Naive thymus-derived CD4-positive, alpha-beta T cell (primary cell): ENCODE measurements at regions of chr7 and their contacts with region 1.

Region 1: DNA sequence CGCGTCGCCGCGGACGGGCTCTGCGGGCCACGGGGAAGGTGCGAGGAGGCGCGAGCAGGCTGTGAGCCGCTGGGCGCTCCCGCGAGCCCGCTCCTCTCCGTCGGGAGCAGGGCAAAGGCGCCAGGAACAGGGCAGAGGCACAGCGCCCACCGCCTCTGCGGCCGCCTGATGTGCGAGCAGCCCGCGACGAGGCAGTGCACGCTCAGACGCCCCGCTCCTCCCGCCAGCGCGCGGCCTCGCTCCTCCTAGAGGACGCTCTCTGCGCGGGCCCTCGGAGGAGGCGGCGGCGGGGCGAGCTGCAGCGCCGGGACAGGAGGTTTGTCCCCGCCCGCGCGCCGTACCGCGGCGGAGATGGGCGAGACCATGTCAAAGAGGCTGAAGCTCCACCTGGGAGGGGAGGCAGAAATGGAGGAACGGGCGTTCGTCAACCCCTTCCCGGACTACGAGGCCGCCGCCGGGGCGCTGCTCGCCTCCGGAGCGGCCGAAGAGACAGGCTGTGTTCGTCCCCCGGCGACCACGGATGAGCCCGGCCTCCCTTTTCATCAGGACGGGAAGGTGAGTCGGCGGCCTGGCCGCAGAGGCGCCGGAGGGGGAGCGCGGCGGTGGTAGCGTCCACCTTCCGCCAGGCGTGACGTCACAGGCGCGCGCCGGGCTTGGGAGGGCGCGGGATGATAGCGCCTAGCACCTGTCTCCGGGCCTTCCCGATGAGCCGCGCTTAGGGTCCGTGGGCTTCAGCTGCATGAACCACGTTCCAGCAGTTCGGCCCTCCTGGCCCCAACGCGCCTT is 731 bp downstream of the LANCL2 start:
- DNase-seq: peak; percentile 95 to 100 (median 99)
- ATAC-seq: peak; percentile 96
- H3K4me3 ChIP-seq: peak overlapping the region; percentile 95
- H3K4me3 Mint-ChIP-seq: peak overlapping the region; percentile 84 to 98 (median 95)
- H3K27ac ChIP-seq: peak overlapping the region; percentile 98
- H3K27ac Mint-ChIP-seq: peak overlapping the region; percentile 96 to 100 (median 98)
- H3K4me1 ChIP-seq: peaks cover 6 to 10% of the 10 kb centered on the region in 2 donors
- H3K4me1 Mint-ChIP-seq: peaks cover 10 to 30% (median 21%) of the 10 kb centered on the region in 7 donors
- H3K27me3 ChIP-seq: no peaks in the 10 kb centered on the region
- H3K27me3 Mint-ChIP-seq: peaks cover 0 to 2% (median 0%) of the 10 kb centered on the region in 5 donors

Region 2: DNA sequence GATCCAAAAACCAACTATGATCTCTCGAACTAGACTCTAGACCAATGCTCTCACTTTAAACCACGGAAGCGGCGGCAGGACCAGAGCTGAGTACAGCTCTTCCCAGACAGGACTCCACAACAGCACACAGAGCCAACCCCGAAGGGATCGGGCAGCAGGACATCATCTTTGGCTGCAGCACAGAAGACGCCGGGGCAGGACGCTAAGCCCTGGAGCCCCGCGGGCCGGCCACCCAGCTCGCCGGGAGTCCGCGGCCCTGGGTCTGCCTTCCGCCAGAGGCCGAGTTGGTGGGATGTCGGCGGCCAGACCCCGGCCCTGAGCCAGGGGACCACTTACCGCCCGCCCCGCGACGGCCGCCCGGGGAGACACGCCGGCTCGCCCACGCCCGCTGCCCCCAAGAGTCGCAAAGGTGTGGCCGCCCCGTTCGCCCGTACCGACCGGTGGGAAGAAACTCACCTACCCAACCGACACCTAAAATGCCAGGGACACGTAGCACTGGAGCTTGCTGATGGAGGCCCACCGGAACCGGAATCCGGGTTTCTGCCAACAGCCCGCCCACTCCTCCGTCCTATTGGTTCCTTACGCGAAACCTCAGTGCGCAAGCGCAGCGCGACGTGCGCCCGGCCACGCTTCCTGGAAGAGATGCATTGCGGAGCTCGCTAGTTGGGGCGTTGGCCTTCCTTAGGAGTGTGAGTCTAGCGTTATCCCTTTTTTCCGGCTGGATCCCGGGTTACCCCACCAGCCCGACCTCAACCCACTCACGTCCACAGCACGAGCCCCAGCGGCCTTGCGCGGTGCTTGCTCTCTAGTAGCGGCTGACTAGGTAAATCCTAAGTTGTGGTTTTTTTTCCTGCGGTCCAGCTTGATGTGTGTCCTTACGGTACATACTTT is 606.9 kb before region 1 on chr7 and contains the start of gene SEC61G:
- CTCF ChIA-PET with region 1: no interaction called
- POLR2A ChIA-PET with region 1: interaction called, 19 read pairs
- intact Hi-C with region 1: loop called (anchors 1 kb)
- DNase-seq: peak; percentile 92 to 96 (median 94)
- ATAC-seq: peak; percentile 98
- H3K4me3 ChIP-seq: peak within 1 kb of the TSS; percentile 67
- H3K4me3 Mint-ChIP-seq: peak within 1 kb of the TSS; percentile 94 to 100 (median 100)
- H3K27ac ChIP-seq: peak within 1 kb of the TSS; percentile 83
- H3K27ac Mint-ChIP-seq: peak within 1 kb of the TSS; percentile 93 to 98 (median 96)
- H3K4me1 ChIP-seq: peaks cover 7 to 11% of the 10 kb centered on the region in 2 donors
- H3K4me1 Mint-ChIP-seq: peaks cover 15 to 54% (median 40%) of the 10 kb centered on the region in 7 donors
- H3K27me3 ChIP-seq: no peaks in the 10 kb centered on the region
- H3K27me3 Mint-ChIP-seq: peaks cover 0 to 21% (median 5%) of the 10 kb centered on the region in 5 donors
- total RNA-seq, gene SEC61G: 31.8 to 174 (median 46.6) TPM

Region 3: GRCh38 chr7:54864663-54865062 is 501.2 kb before region 1 on chr7:
- CTCF ChIA-PET with region 1: no interaction called
- POLR2A ChIA-PET with region 1: no interaction called
- intact Hi-C with region 1: no loop called
- DNase-seq: no peak
- ATAC-seq: no peak
- H3K4me3 ChIP-seq: no peak overlapping the region
- H3K4me3 Mint-ChIP-seq: no peak overlapping the region
- H3K27ac ChIP-seq: no peak overlapping the region
- H3K27ac Mint-ChIP-seq: no peak overlapping the region
- H3K4me1 ChIP-seq: no peaks in the 10 kb centered on the region
- H3K4me1 Mint-ChIP-seq: no peaks in the 10 kb centered on the region
- H3K27me3 ChIP-seq: no peaks in the 10 kb centered on the region
- H3K27me3 Mint-ChIP-seq: peaks cover 0 to 12% (median 7%) of the 10 kb centered on the region in 5 donors

Region 4: DNA sequence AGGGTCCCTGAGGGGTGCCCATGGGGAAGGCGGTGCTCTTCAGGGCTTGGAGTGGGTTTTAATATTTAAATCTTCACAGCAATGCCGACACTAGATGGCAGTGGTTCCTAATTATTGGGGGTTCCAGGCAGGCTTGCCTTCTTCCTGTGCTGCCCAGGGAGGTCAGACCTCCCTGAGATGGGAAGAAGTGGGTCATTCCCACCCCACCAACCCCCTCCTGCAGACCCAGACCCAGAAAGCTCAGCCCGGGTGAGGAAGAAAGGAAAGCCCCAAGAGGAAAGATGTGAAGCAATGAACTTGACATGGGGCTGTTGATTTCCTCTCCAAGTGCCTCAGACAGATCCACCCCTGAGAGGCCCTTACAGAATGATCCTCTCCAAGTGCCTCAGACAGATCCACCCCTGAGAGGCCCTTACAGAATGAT is 85.8 kb before region 1 on chr7:
- CTCF ChIA-PET with region 1: no interaction called
- POLR2A ChIA-PET with region 1: interaction called, 4 read pairs
- intact Hi-C with region 1: loop called (anchors 1 kb)
- DNase-seq: peak in 8 of 9 donors; percentile 15 to 59 (median 44)
- ATAC-seq: peak; percentile 73
- H3K4me3 ChIP-seq: no peak overlapping the region
- H3K4me3 Mint-ChIP-seq: no peak overlapping the region
- H3K27ac ChIP-seq: no peak overlapping the region
- H3K27ac Mint-ChIP-seq: peak overlapping the region in 1 of 9 donors; percentile 52
- H3K4me1 ChIP-seq: no peaks in the 10 kb centered on the region
- H3K4me1 Mint-ChIP-seq: peaks cover 0 to 2% (median 0%) of the 10 kb centered on the region in 7 donors
- H3K27me3 ChIP-seq: no peaks in the 10 kb centered on the region
- H3K27me3 Mint-ChIP-seq: peaks cover 5 to 12% (median 8%) of the 10 kb centered on the region in 5 donors

Region 5: DNA sequence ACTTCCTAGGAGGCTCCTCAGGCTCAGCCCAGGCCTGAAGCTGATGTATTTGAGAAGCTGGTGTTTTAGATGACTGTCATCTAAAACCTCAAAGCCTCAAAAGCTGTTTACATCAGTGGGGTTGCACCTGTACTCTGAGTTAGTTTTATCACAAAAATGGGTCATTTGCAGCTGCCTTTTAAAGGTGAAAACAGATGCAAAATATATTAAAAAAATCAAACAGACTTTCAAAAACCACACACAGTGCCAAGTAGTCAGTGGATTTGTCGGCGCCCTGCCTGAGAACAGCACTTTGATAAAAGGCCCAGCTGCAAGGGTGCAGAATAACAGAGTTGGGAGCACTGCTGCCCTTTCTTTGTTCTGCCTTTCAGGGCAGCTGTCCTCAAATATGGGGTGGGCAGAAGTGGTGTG is 103.4 kb after region 1 on chr7:
- CTCF ChIA-PET with region 1: no interaction called
- POLR2A ChIA-PET with region 1: interaction called, 10 read pairs
- intact Hi-C with region 1: loop called in 1 of 2 experiments (anchors 2 kb)
- DNase-seq: peak in 7 of 9 donors; percentile 57 to 85 (median 76)
- ATAC-seq: peak; percentile 86
- H3K4me3 ChIP-seq: peak overlapping the region; percentile 21
- H3K4me3 Mint-ChIP-seq: peak overlapping the region; percentile 33 to 75 (median 68)
- H3K27ac ChIP-seq: peak overlapping the region; percentile 70
- H3K27ac Mint-ChIP-seq: peak overlapping the region; percentile 85 to 97 (median 93)
- H3K4me1 ChIP-seq: peaks cover 31 to 76% of the 10 kb centered on the region in 2 donors
- H3K4me1 Mint-ChIP-seq: peaks cover 25 to 86% (median 74%) of the 10 kb centered on the region in 7 donors
- H3K27me3 ChIP-seq: no peaks in the 10 kb centered on the region
- H3K27me3 Mint-ChIP-seq: no peaks in the 10 kb centered on the region

Region 6: GRCh38 chr7:55572378-55573233 is 206.7 kb after region 1 on chr7 and contains the start of gene VOPP1:
- CTCF ChIA-PET with region 1: no interaction called
- POLR2A ChIA-PET with region 1: interaction called, 6 read pairs
- intact Hi-C with region 1: loop called (anchors 1 kb)
- DNase-seq: peak; percentile 40 to 79 (median 66)
- ATAC-seq: peak; percentile 81
- H3K4me3 ChIP-seq: peak within 1 kb of the TSS; percentile 87
- H3K4me3 Mint-ChIP-seq: peak within 1 kb of the TSS; percentile 87 to 100 (median 94)
- H3K27ac ChIP-seq: peak within 1 kb of the TSS; percentile 79
- H3K27ac Mint-ChIP-seq: peak within 1 kb of the TSS; percentile 85 to 96 (median 92)
- H3K4me1 ChIP-seq: peaks cover 42 to 45% of the 10 kb centered on the region in 2 donors
- H3K4me1 Mint-ChIP-seq: peaks cover 45 to 65% (median 60%) of the 10 kb centered on the region in 7 donors
- H3K27me3 ChIP-seq: no peaks in the 10 kb centered on the region
- H3K27me3 Mint-ChIP-seq: no peaks in the 10 kb centered on the region
- total RNA-seq, gene VOPP1: 66.2 to 111 (median 82.0) TPM

Region 7: GRCh38 chr7:56051339-56052191 is 685.7 kb after region 1 on chr7 and contains the starts of genes CCT6A and PSPH:
- CTCF ChIA-PET with region 1: no interaction called
- POLR2A ChIA-PET with region 1: interaction called, 9 read pairs
- intact Hi-C with region 1: loop called (anchors 1 kb)
- DNase-seq: peak; percentile 74 to 93 (median 78)
- ATAC-seq: peak; percentile 95
- H3K4me3 ChIP-seq: peak within 1 kb of the TSS; percentile 88
- H3K4me3 Mint-ChIP-seq: peak within 1 kb of the TSS; percentile 91 to 99 (median 96)
- H3K27ac ChIP-seq: peak within 1 kb of the TSS; percentile 91
- H3K27ac Mint-ChIP-seq: peak within 1 kb of the TSS; percentile 78 to 96 (median 93)
- H3K4me1 ChIP-seq: peaks cover 6 to 9% of the 10 kb centered on the region in 2 donors
- H3K4me1 Mint-ChIP-seq: peaks cover 26 to 59% (median 45%) of the 10 kb centered on the region in 7 donors
- H3K27me3 ChIP-seq: no peaks in the 10 kb centered on the region
- H3K27me3 Mint-ChIP-seq: no peaks in the 10 kb centered on the region
- total RNA-seq, gene CCT6A: 38.7 to 143 (median 58.6) TPM
- total RNA-seq, gene PSPH: 3.5 to 10.4 (median 6.5) TPM